Calu3 (cell line): ENCODE measurements at regions of chr12 and their contacts with region 1.

Region 1: GRCh38 chr12:112108201-112109079 is at the start of gene NAA25:
- DNase-seq: peak; percentile 92
- H3K4me3 Mint-ChIP-seq: peak within 1 kb of the TSS; percentile 91
- H3K27ac Mint-ChIP-seq: peak within 1 kb of the TSS; percentile 94
- H3K4me1 Mint-ChIP-seq: peaks cover 53% of the 10 kb centered on the region
- H3K27me3 Mint-ChIP-seq: no peaks in the 10 kb centered on the region
- CTCF ChIP-seq: no peak
- total RNA-seq, gene NAA25: 55.0 and 56.3 TPM in 2 replicates

Region 2: DNA sequence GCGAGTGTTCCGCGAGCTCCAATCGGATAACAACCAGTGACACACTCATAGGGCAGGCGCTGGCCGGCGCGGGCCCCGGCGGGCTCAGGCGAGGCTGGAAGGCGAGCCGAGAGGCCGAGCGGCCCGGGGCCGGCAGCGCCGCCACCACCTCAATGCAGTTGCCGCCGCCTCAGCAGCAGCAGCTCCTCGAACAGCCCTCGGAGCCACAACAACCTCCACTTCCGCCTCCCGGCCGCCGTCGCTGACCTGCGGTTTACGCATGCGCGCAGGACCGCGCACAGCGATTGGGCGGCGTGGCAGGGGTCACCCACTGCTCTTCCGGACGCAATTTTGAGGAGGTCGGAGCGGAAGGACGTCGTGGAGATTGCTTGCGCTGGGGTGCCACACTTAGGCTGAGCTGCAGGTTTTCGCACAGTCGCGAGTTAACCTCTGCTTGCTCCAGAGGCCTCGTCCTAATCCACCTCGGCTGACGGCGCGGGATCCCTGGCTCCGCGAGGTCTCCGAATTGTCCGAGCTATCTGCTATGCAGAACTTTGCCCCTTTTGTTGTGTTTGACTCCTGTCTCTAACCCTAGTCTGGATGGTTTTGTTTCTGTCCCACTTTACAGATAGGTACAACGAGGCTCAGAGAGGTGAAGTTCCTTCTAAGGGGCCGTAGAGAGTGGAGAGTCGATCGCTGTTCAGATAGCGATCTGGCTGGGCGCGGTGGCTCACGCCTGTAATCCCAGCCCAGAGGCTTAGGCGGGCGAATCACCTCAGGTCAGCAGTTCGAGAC is 422.5 kb before region 1 on chr12 and contains the starts of genes ACAD10 and BRAP:
- CTCF ChIA-PET with region 1: no interaction called
- intact Hi-C with region 1: no loop called
- DNase-seq: peak; percentile 97
- H3K4me3 Mint-ChIP-seq: peak within 1 kb of the TSS; percentile 97
- H3K27ac Mint-ChIP-seq: peak within 1 kb of the TSS; percentile 98
- H3K4me1 Mint-ChIP-seq: peaks cover 36% of the 10 kb centered on the region
- H3K27me3 Mint-ChIP-seq: no peaks in the 10 kb centered on the region
- CTCF ChIP-seq: no peak
- total RNA-seq, gene ACAD10: 38.1 and 50.8 TPM in 2 replicates
- total RNA-seq, gene BRAP: 17.8 and 24.0 TPM in 2 replicates

Region 3: DNA sequence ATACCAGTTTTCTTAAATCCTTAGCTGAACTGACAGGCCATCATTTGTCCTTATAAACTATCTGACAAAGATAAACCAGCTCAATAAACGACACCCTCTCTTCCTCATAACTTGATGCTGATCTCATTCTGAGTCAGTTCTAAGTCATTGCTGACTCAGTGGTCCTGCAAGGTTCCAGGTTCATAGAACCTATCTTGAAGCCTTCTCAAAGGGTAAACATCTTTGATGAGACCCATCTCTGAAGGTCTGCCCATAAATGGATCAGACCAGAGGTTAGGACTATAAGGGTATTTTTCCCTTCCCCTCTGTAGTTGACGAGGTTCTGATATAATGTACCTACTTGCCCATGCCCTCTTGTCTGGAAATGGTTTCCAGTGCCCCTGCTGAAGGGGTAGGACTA is 11.8 kb before region 1 on chr12:
- CTCF ChIA-PET with region 1: interaction called, 3 read pairs
- intact Hi-C with region 1: loop called (anchors 1 kb)
- DNase-seq: no peak
- H3K4me3 Mint-ChIP-seq: no peak overlapping the region
- H3K27ac Mint-ChIP-seq: peak overlapping the region; percentile 3
- H3K4me1 Mint-ChIP-seq: peaks cover 24% of the 10 kb centered on the region
- H3K27me3 Mint-ChIP-seq: no peaks in the 10 kb centered on the region
- CTCF ChIP-seq: no peak

Region 4: DNA sequence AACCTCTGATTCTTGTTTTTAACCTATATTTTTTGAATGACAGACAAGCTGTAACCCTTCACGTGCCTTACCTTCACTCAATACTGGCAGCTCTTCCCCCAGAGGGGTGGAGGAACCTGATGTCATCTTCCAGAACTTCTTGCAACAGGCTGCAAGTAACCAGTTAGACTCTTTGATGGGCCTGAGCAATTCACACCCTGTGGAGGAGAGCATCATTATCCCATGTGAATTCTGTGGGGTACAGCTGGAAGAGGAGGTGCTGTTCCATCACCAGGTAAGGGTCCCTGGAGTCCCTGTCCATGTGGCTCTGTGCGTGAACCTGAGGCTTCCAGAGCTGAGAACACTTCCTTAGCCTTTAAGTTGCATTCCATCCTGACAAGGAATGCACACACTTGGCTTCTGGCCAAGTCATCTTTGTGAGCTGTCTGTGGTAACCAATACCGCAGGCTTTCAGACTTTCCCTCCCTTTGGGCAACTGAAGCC is 39.6 kb after region 1 on chr12:
- CTCF ChIA-PET with region 1: interaction called, 3 read pairs
- intact Hi-C with region 1: loop called (anchors 5 kb)
- DNase-seq: peak; percentile 23
- H3K4me3 Mint-ChIP-seq: no peak overlapping the region
- H3K27ac Mint-ChIP-seq: peak overlapping the region; percentile 49
- H3K4me1 Mint-ChIP-seq: peaks cover 23% of the 10 kb centered on the region
- H3K27me3 Mint-ChIP-seq: no peaks in the 10 kb centered on the region
- CTCF ChIP-seq: no peak

Region 5: DNA sequence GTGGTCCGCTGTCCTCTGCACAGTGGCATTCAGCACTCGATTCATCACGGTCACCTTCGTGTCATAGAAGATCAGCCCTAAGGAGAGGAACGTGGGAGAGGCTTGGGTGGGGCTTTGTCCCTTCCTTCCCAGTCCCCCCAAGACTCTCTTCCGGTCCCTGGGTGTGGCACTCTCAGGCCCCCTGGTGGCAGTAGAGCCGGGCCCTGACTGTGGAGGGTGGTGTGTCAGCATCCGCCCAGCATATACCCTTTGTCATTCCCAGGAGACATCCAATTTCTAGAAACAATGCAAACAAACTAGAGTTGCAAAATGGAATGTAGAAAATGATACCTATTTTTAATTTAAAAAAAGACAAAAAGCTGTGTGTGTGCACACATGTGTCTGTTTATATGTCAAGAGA is 61.9 kb after region 1 on chr12:
- CTCF ChIA-PET with region 1: no interaction called
- intact Hi-C with region 1: no loop called
- DNase-seq: peak; percentile 50
- H3K4me3 Mint-ChIP-seq: no peak overlapping the region
- H3K27ac Mint-ChIP-seq: peak overlapping the region; percentile 43
- H3K4me1 Mint-ChIP-seq: no peaks in the 10 kb centered on the region
- H3K27me3 Mint-ChIP-seq: no peaks in the 10 kb centered on the region
- CTCF ChIP-seq: peak; percentile 56